Prostate gland (tissue), 2 donors: ENCODE measurements at regions of chr2 and their contacts with region 1.

Region 1: DNA sequence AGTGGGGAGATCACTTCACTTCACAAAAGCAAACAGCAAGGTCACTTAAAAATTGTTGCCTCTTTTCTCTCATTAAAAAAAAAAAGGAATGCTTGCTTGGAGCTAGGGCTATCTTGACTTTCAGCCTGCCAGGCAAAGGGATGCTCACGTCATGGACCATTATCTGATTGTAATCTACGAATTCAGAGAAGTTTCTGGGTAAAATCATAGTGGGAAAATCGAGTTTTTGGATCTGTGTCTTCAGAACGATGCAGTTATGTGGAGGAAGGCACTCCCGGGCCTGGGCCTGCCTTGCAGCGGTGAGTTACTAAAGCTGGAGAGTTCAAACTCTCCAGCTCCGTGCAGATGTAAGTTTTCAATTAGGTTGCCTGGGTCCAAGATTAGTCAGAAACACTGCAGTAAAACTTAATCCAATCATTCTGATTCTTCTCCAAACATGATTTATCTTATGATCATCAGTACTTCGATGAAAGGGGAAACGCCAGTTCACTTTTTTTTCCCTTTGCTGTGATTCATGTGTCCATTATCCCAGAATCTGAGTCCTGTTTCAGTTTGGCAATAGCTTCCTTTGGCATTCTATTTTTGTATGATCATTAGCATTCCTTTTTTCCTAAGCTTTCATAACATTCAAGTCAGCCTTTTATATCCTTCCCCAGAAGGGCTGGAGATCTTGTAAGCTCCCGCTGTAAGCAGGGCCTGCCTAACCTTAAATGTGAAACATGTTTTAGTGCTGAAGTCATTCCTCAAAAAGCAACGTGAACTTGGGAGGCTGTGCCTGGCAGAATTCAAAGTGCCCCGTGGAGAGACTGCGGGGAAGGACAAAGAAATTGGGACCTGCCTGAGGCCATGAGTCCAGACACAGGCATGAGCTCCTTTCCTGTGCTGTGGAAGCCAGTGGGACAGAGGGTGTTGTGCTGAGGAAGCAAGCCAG is 119.3 kb upstream of the TWIST2 start:
- DNase-seq: no peak
- H3K4me3 ChIP-seq: no peak overlapping the region
- H3K27ac ChIP-seq: peak overlapping the region; percentile 60 to 73
- H3K4me1 ChIP-seq: no peaks in the 10 kb centered on the region
- H3K27me3 ChIP-seq: no peaks in the 10 kb centered on the region
- CTCF ChIP-seq: no peak
- POLR2A ChIP-seq: no peak

Region 2: GRCh38 chr2:238288650-238289573 is 439.7 kb before region 1 on chr2:
- intact Hi-C with region 1: loop called (anchors 5 kb)
- DNase-seq: peak; percentile 99
- H3K4me3 ChIP-seq: peak overlapping the region; percentile 72 to 83
- H3K27ac ChIP-seq: peak overlapping the region; percentile 95 to 96
- H3K4me1 ChIP-seq: peaks cover 38% of the 10 kb centered on the region
- H3K27me3 ChIP-seq: no peaks in the 10 kb centered on the region
- CTCF ChIP-seq: peak in 2 of 4 experiments; percentile 38 to 45
- POLR2A ChIP-seq: peak; percentile 85

Region 3: DNA sequence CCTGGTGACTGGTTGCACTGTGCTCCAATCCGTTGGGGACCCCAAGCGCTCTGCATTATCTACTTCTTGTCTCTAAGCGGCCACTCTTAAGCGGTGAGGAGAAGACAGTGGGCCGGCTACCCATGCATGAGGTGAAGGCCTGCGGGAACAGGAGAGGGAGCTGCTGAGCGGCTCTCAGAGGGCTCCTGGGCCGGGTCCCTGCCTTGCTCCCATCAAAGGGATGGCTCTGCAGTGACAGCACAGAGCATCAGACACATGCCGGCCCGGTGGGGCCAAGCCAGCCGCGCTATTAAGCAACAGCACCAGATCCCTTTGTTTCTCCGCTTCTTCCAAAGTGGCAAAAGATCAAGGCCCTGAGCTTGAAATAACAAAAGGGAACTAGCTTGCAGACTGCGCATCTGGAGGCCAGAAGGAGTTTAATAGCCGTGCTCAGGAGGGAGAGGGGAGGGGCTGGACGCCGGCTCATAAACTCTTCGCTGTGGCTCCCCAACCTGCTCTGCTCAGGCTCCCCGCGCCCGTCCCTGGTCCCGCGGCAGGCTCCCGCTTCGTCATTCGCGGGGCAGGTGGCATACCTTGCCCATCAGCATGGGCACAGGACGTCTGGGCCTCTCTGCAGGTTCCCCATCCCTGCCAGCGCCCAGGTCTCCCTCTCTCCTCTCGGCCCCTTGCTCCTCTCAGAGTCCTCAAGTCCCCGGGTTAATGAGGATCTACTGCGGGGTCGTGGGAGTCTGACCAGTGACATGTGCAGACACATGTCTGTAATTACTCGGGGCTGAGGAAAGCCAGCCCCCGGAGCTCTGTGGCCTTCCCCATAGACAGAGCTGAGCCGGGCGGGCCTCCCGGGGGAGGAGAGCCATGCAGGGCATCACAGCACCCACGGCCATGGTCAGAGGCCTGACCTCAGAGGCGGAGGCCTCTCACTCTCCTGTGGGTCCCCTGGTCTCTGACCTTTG is 205.2 kb before region 1 on chr2:
- intact Hi-C with region 1: loop called (anchors 5 kb)
- DNase-seq: peak; percentile 58
- H3K4me3 ChIP-seq: no peak overlapping the region
- H3K27ac ChIP-seq: peak overlapping the region in 1 of 2 donors; percentile 25
- H3K4me1 ChIP-seq: peaks cover 7% of the 10 kb centered on the region
- H3K27me3 ChIP-seq: no peaks in the 10 kb centered on the region
- CTCF ChIP-seq: peak in 3 of 4 experiments; percentile 18 to 49 (median 39)
- POLR2A ChIP-seq: no peak

Region 4: DNA sequence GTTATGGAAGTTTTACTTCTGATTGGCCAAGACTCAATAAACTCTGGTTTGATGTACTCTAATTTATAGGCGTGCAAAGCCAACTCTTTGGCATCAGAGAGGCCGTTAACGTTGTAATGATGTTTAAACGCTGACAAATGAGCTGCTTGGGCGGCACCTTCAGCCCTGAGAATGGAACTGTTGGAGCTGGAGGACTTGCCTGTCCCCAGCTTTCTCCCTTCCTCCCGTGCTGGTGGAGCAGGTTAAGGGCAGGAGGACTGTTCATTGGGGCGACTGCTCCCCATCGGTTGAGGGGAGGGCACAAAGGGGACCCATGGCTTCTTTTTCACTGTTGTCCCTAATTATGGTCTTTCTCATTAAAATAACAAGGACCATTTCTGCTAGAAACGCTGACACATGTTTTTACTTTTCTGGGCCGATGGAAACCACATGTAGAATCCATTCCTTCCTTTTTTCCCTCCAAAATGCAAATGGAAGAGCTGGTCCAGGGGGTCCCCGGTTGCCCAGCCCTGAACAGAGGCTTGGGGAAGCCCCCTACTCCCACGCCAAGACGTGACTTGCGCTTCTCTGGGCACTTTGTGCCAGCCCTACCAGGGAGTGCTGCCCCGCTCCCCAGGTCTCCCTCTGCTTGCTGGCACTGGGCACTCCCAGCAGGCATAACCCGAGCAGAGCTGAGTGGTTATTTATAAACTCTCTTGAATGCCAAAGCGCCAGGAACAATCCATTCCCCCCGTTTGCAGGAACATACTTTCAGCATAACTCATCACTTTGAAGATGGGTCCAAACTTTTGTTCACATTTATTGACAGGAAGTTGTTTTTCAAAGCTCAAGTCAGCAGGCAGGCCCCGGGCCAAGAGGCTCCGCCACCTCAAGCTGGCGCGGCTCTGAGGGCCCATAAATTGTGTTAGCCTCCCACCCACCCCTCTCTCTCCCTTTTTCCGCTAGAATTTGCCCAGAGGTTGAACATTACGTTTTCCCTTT is 131.7 kb before region 1 on chr2:
- intact Hi-C with region 1: loop called (anchors 2 kb)
- DNase-seq: peak; percentile 90
- H3K4me3 ChIP-seq: no peak overlapping the region
- H3K27ac ChIP-seq: peak overlapping the region; percentile 76 to 88
- H3K4me1 ChIP-seq: peaks cover 14% of the 10 kb centered on the region
- H3K27me3 ChIP-seq: no peaks in the 10 kb centered on the region
- CTCF ChIP-seq: peak in 1 of 4 experiments; percentile 21
- POLR2A ChIP-seq: peak; percentile 19

Region 5: GRCh38 chr2:238771218-238771617 is 42.6 kb after region 1 on chr2:
- intact Hi-C with region 1: loop called (anchors 5 kb)
- DNase-seq: no peak
- H3K4me3 ChIP-seq: no peak overlapping the region
- H3K27ac ChIP-seq: no peak overlapping the region
- H3K4me1 ChIP-seq: no peaks in the 10 kb centered on the region
- H3K27me3 ChIP-seq: peaks cover 2% of the 10 kb centered on the region
- CTCF ChIP-seq: no peak
- POLR2A ChIP-seq: no peak

Region 6: DNA sequence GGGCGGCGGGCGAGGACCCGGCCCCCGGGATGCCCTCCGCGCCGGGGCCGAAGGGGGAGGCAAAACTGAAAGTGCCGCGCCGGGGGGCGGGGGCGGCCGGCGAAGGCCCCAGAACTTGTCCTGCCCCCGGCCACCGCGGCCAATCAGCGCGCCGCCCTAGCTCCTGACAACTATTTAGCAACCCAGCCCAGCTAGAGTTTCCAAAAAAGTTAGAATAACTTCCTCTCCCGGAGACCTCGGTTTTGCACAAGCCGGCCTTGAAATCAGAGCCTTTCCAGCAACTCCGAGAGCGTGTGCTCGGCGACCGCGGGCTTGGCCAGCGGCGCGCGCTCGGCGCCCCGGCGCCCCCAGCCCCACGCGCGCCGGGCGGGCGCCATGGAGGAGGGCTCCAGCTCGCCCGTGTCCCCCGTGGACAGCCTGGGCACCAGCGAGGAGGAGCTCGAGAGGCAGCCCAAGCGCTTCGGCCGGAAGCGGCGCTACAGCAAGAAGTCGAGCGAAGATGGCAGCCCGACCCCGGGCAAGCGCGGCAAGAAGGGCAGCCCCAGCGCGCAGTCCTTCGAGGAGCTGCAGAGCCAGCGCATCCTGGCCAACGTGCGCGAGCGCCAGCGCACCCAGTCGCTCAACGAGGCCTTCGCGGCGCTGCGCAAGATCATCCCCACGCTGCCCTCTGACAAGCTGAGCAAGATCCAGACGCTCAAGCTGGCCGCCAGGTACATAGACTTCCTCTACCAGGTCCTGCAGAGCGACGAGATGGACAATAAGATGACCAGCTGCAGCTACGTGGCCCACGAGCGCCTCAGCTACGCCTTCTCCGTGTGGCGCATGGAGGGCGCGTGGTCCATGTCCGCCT is 119.5 kb after region 1 on chr2 and contains the start of gene TWIST2:
- intact Hi-C with region 1: loop called (anchors 5 kb)
- DNase-seq: peak; percentile 73
- H3K4me3 ChIP-seq: peak within 1 kb of the TSS; percentile 48 to 54
- H3K27ac ChIP-seq: peak within 1 kb of the TSS; percentile 86
- H3K4me1 ChIP-seq: no peaks in the 10 kb centered on the region
- H3K27me3 ChIP-seq: peaks cover 11% of the 10 kb centered on the region
- CTCF ChIP-seq: peak in 1 of 4 experiments; percentile 25
- POLR2A ChIP-seq: no peak
- total RNA-seq, gene TWIST2: 23.5 to 52.9 TPM